A549 (cell line): ENCODE measurements at regions of chr16 and their contacts with region 1.

Region 1: GRCh38 chr16:10509534-10510025 is 70.8 kb downstream of the EMP2 start:
- DNase-seq: peak; percentile 82 to 84
- ATAC-seq: peak; percentile 99
- H3K4me3 ChIP-seq: no peak overlapping the region
- H3K27ac ChIP-seq: no peak overlapping the region
- H3K4me1 ChIP-seq: no peaks in the 10 kb centered on the region
- CTCF ChIP-seq: peak; percentile 86
- EP300 ChIP-seq: no peak
- POLR2A ChIP-seq: no peak
- RAD21 ChIP-seq: peak; percentile 89 to 93

Region 2: DNA sequence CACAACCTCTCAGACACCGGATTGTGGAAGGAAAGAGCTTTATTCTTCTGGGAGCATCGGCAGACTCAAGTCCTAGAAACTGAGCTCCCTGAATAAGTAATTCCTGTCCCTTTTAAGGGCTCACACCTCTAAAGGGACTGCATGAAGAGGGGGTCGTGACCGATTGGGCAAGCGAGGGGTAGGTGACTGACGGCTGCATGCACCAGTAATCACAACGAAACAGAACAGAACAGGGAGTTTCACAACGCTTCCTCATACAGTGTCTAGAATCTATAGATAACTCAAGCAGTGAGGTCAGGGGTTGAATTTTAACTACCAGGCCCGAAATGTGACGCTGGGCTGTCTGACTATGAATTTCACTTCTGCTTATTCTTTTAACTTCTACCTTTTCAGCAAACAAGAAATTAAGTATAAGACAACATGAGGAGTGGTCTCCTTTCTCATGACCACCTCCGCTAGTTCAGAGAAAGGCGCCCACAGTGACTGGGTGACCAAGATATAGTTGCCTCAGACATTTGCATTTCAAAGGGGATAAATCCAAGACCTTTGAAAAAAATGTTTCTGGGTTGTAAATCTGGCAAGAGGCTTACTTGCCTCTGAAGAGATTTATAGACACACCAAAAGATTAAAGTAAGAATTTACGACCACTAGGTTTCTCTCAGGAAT is 212.1 kb before region 1 on chr16:
- CTCF ChIA-PET with region 1: interaction called, 10 read pairs
- POLR2A ChIA-PET with region 1: no interaction called
- DNase-seq: no peak
- ATAC-seq: no peak
- H3K4me3 ChIP-seq: no peak overlapping the region
- H3K27ac ChIP-seq: no peak overlapping the region
- H3K4me1 ChIP-seq: no peaks in the 10 kb centered on the region
- CTCF ChIP-seq: no peak
- EP300 ChIP-seq: no peak
- POLR2A ChIP-seq: no peak
- RAD21 ChIP-seq: no peak

Region 3: GRCh38 chr16:10521681-10522274 is 12.2 kb after region 1 on chr16:
- CTCF ChIA-PET with region 1: interaction called, 10 read pairs
- POLR2A ChIA-PET with region 1: no interaction called
- DNase-seq: peak; percentile 45 to 69
- ATAC-seq: peak; percentile 47 to 83; a peak in 3 of 6 replicates
- H3K4me3 ChIP-seq: no peak overlapping the region
- H3K27ac ChIP-seq: peak overlapping the region in 1 of 2 experiments; percentile 80; a peak in 1 of 6 replicates
- H3K4me1 ChIP-seq: peaks cover 14% of the 10 kb centered on the region
- CTCF ChIP-seq: peak; percentile 67
- EP300 ChIP-seq: no peak
- POLR2A ChIP-seq: no peak
- RAD21 ChIP-seq: peak; percentile 52 to 72

Region 4: GRCh38 chr16:10737068-10737625 is 227.6 kb after region 1 on chr16:
- CTCF ChIA-PET with region 1: interaction called, 198 read pairs
- POLR2A ChIA-PET with region 1: interaction called, 3 read pairs
- DNase-seq: peak; percentile 65 to 70
- ATAC-seq: peak; percentile 65 to 81; a peak in 5 of 6 replicates
- H3K4me3 ChIP-seq: no peak overlapping the region
- H3K27ac ChIP-seq: peak overlapping the region; percentile 44 to 66; a peak in 4 of 6 replicates
- H3K4me1 ChIP-seq: peaks cover 26% of the 10 kb centered on the region
- CTCF ChIP-seq: peak; percentile 94
- EP300 ChIP-seq: no peak
- POLR2A ChIP-seq: no peak
- RAD21 ChIP-seq: peak; percentile 95 to 96